ENCODE measurements at regions of chr7 and their contacts with region 1.

Region 1: DNA sequence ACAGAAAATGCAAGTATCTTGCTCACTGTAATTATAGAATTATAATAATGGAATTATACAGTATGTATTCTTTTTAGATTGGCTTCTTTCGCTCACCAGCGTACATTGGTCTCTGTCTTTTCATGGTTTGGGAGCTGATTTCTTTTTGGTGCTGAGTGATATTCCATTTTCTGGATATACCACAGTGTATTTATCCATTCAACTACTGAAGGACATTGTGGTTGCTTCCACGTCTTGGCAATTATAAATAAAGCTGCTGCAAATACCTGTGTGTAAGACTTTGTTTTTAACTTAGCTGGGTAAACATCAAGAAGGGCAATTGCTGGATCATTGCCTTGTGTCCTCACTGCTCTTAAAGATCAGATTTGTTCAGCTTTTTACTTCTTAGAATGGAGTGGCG is 55.3 kb downstream of the SEPTIN7 start:
- DNase-seq: no peak
- ATAC-seq: no peak
- H3K4me3 ChIP-seq: no peak overlapping the region
- H3K4me3 Mint-ChIP-seq: no peak overlapping the region
- H3K27ac ChIP-seq: no peak overlapping the region
- H3K27ac Mint-ChIP-seq: no peak overlapping the region
- H3K4me1 ChIP-seq: peaks cover 11% of the 10 kb centered on the region
- H3K4me1 Mint-ChIP-seq: peaks cover 78% of the 10 kb centered on the region
- H3K27me3 ChIP-seq: no peaks in the 10 kb centered on the region
- H3K27me3 Mint-ChIP-seq: no peaks in the 10 kb centered on the region
- CTCF ChIP-seq: no peak

Region 2: DNA sequence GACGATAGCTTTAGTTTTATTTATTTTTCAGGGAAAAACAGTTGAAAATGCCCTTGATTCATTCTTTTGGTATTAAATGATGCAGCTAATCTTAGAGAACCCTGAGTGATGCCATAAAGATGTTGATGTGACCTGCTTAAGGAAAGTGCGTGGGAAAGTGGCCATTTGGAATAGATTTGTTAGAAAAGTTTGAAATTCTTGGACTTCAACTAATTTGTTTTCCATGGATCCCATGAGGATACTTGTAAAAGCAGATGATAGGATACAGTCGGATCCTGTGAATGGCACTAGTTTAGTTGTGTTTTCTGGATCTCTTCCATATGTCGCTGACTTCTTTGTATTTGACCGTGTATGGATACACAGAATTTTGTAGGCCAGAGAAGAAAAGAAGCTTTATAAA is 13.6 kb after region 1 on chr7:
- CTCF ChIA-PET with region 1: no interaction called
- POLR2A ChIA-PET with region 1: no interaction called
- intact Hi-C with region 1: no loop called
- DNase-seq: no peak
- ATAC-seq: no peak
- H3K4me3 ChIP-seq: no peak overlapping the region
- H3K4me3 Mint-ChIP-seq: no peak overlapping the region
- H3K27ac ChIP-seq: no peak overlapping the region
- H3K27ac Mint-ChIP-seq: no peak overlapping the region
- H3K4me1 ChIP-seq: no peaks in the 10 kb centered on the region
- H3K4me1 Mint-ChIP-seq: peaks cover 41% of the 10 kb centered on the region
- H3K27me3 ChIP-seq: no peaks in the 10 kb centered on the region
- H3K27me3 Mint-ChIP-seq: no peaks in the 10 kb centered on the region
- CTCF ChIP-seq: no peak

Region 3: GRCh38 chr7:35894721-35895120 is 38.5 kb after region 1 on chr7:
- CTCF ChIA-PET with region 1: no interaction called
- POLR2A ChIA-PET with region 1: interaction called, 3 read pairs
- intact Hi-C with region 1: loop called in 1 of 2 experiments (anchors 5 kb)
- DNase-seq: no peak
- ATAC-seq: no peak
- H3K4me3 ChIP-seq: no peak overlapping the region
- H3K4me3 Mint-ChIP-seq: no peak overlapping the region
- H3K27ac ChIP-seq: no peak overlapping the region
- H3K27ac Mint-ChIP-seq: peak overlapping the region; percentile 12
- H3K4me1 ChIP-seq: no peaks in the 10 kb centered on the region
- H3K4me1 Mint-ChIP-seq: peaks cover 26% of the 10 kb centered on the region
- H3K27me3 ChIP-seq: no peaks in the 10 kb centered on the region
- H3K27me3 Mint-ChIP-seq: no peaks in the 10 kb centered on the region
- CTCF ChIP-seq: no peak

Measured in CD8-positive, alpha-beta T cell (primary cell).